ENCODE measurements at regions of chr4 and their contacts with region 1.

Region 1: GRCh38 chr4:76430519-76431388 is 4.3 kb upstream of the SHROOM3 start:
- DNase-seq: no peak
- ATAC-seq: no peak
- H3K4me3 ChIP-seq: no peak overlapping the region
- H3K27ac ChIP-seq: no peak overlapping the region
- H3K4me1 ChIP-seq: no peaks in the 10 kb centered on the region
- H3K27me3 ChIP-seq: no peaks in the 10 kb centered on the region

Region 2: DNA sequence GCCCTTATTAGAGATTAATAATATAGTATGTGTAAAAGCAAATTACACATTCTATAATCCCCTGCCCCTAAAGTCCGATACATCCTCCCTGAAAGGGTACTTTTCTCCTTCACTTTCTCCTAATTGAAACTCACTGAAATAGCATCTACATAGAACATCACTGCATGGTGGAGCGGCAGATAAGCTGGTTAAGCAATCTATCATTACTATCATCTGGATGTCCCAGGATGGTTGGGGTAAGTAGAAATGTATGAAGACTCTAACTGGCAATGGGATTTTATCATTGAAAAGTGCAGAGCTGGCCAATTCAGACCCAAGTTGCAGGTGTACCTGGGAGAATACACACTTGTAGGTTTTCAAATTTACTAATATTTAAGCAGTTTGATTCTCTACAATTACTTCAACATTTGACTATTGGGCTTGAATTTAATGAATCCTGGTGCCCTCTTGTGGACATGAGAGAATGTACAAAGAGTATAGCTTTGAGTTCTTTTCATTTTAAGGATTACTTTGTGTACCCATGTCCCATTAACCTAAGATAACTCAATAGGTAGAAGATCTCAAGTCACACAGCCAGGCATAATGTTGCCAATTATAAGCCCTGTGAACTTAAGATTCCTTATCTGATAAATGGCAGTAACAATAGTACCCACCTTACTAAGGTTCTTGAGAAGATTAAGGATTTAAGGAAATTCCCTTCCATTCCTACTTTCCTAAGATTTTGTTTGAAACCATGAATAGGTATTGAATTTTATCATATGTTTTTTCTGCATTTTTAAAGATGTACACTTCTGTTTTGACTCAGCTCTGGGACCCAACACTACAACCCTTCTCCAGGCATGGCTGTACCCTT is 74.1 kb after region 1 on chr4:
- intact Hi-C with region 1: loop called (anchors 2 to 5 kb)
- DNase-seq: no peak
- ATAC-seq: no peak
- H3K4me3 ChIP-seq: no peak overlapping the region
- H3K27ac ChIP-seq: no peak overlapping the region
- H3K4me1 ChIP-seq: no peaks in the 10 kb centered on the region
- H3K27me3 ChIP-seq: no peaks in the 10 kb centered on the region

Measured in right cardiac atrium (tissue), 5 donors.